Heart right ventricle (tissue), 16 donors: ENCODE measurements at regions of chr20 and their contacts with region 1.

Region 1: DNA sequence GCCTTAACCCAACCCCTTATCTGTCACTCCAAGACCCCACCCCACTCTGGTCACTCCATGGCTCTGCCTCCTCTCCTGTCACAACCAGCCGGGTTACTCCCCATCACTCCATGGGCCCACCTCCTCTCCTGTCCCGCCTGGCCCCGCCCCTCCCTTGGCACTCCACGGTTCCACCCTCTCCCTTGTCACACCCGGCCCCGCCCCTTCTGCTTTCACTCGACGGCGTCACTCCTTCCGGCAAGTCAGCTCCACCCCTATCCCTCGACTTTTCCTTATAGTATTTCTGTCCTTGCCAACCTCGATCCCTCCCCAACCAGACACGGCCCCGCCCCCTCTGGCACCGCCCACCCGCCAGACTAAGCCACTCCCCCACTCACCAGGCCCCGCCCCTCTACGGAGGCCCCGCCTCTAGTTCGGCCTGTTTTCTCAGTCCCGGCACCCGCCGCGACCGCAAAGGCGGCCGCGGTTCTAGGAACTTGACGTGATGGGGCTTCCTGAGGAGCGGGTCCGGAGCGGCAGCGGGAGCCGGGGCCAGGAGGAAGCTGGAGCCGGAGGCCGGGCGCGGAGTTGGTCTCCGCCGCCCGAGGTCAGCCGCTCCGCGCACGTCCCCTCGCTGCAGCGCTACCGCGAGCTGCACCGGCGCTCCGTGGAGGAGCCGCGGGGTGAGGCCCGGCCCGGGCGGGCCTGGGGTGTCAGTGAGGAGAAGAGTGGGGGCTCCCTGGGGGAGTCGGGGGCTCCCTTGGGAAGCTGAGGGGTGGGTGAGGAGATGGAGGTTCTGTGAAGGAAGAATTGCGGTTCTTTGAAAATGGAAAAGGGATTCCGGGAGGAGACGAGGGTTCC is at the start of gene ACSS2:
- DNase-seq: peak; percentile 99 to 100
- ATAC-seq: peak; percentile 89 to 95 (median 92)
- H3K4me3 ChIP-seq: peak within 1 kb of the TSS; percentile 52 to 94 (median 76)
- H3K27ac ChIP-seq: peak within 1 kb of the TSS; percentile 49 to 91 (median 89)
- H3K4me1 ChIP-seq: peaks cover 8 to 57% (median 48%) of the 10 kb centered on the region in 9 donors
- H3K27me3 ChIP-seq: peaks cover 0 to 4% (median 0%) of the 10 kb centered on the region in 7 donors
- CTCF ChIP-seq: peak in 1 of 9 donors; percentile 9
- total RNA-seq, gene ACSS2: 90.2 to 125 (median 104) TPM

Region 2: DNA sequence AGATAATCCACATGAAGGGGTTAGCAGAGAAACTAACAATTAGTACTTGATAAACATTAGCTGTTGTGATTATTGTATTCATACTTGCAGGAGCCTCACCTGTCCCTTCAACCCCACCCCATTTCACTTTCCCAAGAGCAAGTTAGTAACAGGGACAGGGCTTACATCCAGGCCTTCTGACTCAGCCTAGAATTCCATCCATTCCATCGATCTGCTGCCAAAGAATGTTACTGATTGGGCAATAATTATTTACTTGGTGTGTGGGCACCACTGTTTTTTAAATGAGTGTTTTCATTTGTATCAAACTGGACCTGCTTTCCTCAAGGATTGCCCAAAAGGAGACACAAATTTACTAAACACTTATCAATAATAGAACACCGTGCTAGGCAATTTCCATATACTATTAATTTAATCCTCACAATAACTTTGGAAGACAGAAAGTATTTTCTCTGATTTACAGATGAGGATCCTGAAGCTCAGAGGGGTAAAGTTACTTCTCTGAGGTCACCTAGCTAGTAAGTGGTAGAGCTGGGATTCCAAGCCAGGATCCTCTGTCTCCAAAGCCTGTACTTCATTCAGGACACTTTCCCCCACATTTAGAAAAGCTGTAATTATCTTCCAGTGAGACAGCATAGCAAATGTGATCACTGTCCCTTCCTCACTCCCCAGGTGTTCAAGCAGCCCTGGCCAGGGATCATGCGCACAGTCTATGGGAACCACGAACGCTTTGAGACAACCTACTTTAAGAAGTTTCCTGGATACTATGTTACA is 46.5 kb after region 1 on chr20:
- intact Hi-C with region 1: no loop called
- DNase-seq: peak in 1 of 2 donors; percentile 28
- ATAC-seq: peak in 7 of 8 donors; percentile 57 to 88 (median 80)
- H3K4me3 ChIP-seq: no peak overlapping the region
- H3K27ac ChIP-seq: peak overlapping the region; percentile 22 to 76 (median 56)
- H3K4me1 ChIP-seq: peaks cover 0 to 26% (median 12%) of the 10 kb centered on the region in 9 donors
- H3K27me3 ChIP-seq: no peaks in the 10 kb centered on the region
- CTCF ChIP-seq: no peak

Region 3: DNA sequence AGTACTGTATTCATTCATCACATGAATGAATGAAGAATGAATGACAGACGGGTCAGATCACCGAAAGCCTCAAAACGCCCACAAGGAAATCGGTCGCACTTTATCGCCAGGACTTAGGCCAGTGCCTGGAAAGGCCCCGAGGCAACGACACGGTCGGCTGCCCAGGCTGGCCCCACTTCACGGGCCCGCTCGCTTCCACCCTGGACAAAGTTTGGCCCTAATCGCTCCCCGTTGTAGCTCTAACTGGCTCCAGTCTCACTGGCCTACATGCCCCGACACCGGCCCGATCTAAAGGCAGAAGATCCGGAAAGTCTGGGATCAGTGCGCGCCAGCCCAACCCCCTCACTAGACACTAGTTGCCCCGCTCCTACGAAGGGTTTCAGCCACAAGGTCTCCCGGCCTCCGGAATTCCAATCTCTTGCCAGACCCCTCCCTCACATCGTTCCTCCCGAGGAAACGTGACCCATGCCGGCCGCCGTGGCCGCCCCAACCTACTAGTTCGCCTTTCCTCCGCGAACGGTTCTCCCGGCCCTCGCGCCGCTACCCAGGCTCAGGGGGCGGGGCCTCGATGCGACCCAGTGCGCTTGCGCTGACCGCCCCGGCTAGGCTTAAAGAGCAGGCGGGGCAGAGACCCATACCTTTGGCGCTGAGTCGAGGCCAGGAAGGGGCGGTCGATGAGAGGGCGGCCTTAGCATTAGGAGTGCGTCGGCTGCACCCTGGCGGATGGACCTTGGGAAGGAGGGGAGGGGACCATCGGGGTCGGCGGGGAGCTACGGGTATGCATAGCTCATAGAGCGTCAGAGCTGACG is 79.1 kb after region 1 on chr20 and contains the starts of genes GSS and MYH7B:
- intact Hi-C with region 1: loop called (anchors 1 to 5 kb)
- DNase-seq: peak; percentile 97 to 99
- ATAC-seq: peak; percentile 95 to 98 (median 97)
- H3K4me3 ChIP-seq: peak within 1 kb of the TSS; percentile 33 to 76 (median 63)
- H3K27ac ChIP-seq: peak within 1 kb of the TSS; percentile 77 to 98 (median 92)
- H3K4me1 ChIP-seq: peaks cover under 1 to 52% (median 24%) of the 10 kb centered on the region in 9 donors
- H3K27me3 ChIP-seq: no peaks in the 10 kb centered on the region
- CTCF ChIP-seq: peak in 7 of 9 donors; percentile 39 to 75 (median 56)
- total RNA-seq, gene GSS: 20.0 to 33.2 (median 24.7) TPM
- total RNA-seq, gene MYH7B: 117 to 318 (median 182) TPM

Region 4: GRCh38 chr20:35008411-35009342 is 132.3 kb after region 1 on chr20:
- intact Hi-C with region 1: loop called in 1 of 10 experiments (anchors 5 kb)
- DNase-seq: no peak
- ATAC-seq: peak in 3 of 8 donors; percentile 2 to 50 (median 28)
- H3K4me3 ChIP-seq: no peak overlapping the region
- H3K27ac ChIP-seq: peak overlapping the region in 1 of 10 donors; percentile 26
- H3K4me1 ChIP-seq: peaks cover 0 to 38% (median 4%) of the 10 kb centered on the region in 9 donors
- H3K27me3 ChIP-seq: no peaks in the 10 kb centered on the region
- CTCF ChIP-seq: no peak